PC-9 (cell line): ENCODE measurements at regions of chr13 and their contacts with region 1.

Region 1: GRCh38 chr13:30465585-30466357 is at the start of gene HMGB1:
- DNase-seq: peak; percentile 94 to 97
- H3K4me3 ChIP-seq: peak within 1 kb of the TSS; percentile 72
- H3K27ac ChIP-seq: peak within 1 kb of the TSS; percentile 86
- H3K4me1 ChIP-seq: peaks cover 31% of the 10 kb centered on the region
- H3K27me3 ChIP-seq: no peaks in the 10 kb centered on the region
- CTCF ChIP-seq: no peak
- total RNA-seq, gene HMGB1: 172 and 313 TPM in 2 replicates

Region 2: DNA sequence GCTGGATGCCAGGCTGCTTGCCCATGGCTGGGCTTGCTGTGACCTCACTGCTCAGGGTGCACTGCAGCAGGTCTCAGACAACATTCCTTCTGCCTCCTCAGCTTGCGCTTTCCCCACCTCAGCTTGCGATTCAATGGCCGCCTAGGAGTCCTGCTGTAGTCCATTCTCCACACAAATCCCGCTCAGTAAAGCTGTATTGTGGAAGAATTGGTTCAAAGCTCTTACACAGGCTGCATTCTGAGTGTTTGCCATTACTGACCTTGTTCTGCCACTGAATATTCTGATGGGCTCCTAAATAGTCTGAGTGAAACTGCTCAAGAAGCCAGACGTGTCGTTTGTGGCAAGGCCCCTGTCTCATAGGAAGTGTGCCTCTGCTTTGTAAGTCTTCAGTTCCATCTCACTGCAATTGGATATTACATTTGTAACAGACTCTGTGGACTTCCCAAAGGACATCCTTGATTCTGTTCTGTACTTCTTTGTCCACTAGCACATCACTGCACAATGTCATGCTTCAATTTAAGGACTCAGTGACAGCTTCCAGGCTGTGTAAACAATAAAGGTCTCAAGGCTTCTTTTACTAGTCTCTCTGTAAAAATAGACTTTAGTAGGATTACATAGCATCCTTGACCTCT is 208.2 kb before region 1 on chr13:
- CTCF ChIA-PET with region 1: no interaction called
- POLR2A ChIA-PET with region 1: no interaction called
- intact Hi-C with region 1: loop called (anchors 10 kb)
- DNase-seq: no peak
- H3K4me3 ChIP-seq: no peak overlapping the region
- H3K27ac ChIP-seq: no peak overlapping the region
- H3K4me1 ChIP-seq: no peaks in the 10 kb centered on the region
- H3K27me3 ChIP-seq: no peaks in the 10 kb centered on the region
- CTCF ChIP-seq: no peak

Region 3: DNA sequence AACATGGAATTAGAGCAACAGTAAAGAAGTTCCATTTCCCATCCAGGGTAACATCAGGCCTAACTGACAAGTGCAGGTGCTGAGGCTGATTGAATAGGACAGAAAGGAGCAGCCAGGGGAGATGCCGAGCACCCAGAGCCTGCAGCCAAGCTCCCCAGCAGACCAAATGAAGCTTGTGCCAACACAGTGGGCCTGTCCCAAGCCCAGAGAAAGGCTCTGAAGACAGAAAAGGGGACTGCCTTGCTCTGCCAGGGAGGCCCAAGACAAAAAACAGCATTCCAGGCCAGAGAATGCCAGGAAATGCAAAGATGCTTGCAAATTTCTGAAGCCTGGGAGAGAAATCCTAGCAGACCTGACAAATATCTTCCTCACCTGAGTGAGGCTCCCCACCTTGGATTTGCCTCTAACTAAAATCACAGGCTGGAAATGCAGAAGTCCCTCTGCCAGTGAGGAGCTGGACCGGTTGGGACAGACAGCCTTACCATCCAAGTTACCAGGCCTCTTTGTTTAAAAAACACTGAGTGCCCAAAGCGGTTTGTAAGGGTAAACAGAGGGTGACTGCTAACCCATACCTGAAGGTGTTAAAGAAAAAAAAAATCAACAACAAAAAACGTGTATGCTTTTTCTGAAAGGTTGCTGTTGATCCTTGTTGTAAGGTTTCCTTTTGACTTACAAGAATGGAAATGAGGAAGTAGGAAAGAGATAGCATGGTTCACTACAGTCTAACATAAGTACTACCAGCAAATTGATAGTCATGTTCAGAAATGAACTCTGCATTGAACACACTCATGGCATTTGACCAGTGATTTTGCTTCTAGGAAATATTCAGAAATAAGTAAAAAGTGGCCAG is 11.8 kb after region 1 on chr13:
- CTCF ChIA-PET with region 1: no interaction called
- POLR2A ChIA-PET with region 1: no interaction called
- intact Hi-C with region 1: loop called (anchors 1 kb)
- DNase-seq: no peak
- H3K4me3 ChIP-seq: no peak overlapping the region
- H3K27ac ChIP-seq: no peak overlapping the region
- H3K4me1 ChIP-seq: no peaks in the 10 kb centered on the region
- H3K27me3 ChIP-seq: no peaks in the 10 kb centered on the region
- CTCF ChIP-seq: no peak

Region 4: GRCh38 chr13:30617315-30618185 is 151.8 kb after region 1 on chr13 and contains the start of gene USPL1:
- CTCF ChIA-PET with region 1: no interaction called
- POLR2A ChIA-PET with region 1: no interaction called
- intact Hi-C with region 1: loop called (anchors 1 kb)
- DNase-seq: peak; percentile 93 to 95
- H3K4me3 ChIP-seq: peak within 1 kb of the TSS; percentile 99
- H3K27ac ChIP-seq: peak within 1 kb of the TSS; percentile 98
- H3K4me1 ChIP-seq: peaks cover 33% of the 10 kb centered on the region
- H3K27me3 ChIP-seq: no peaks in the 10 kb centered on the region
- CTCF ChIP-seq: no peak
- total RNA-seq, gene USPL1: 8.9 and 10.7 TPM in 2 replicates

Region 5: GRCh38 chr13:30865123-30866049 is 399.6 kb after region 1 on chr13:
- CTCF ChIA-PET with region 1: no interaction called
- POLR2A ChIA-PET with region 1: no interaction called
- intact Hi-C with region 1: loop called (anchors 10 kb)
- DNase-seq: peak; percentile 57 to 65
- H3K4me3 ChIP-seq: no peak overlapping the region
- H3K27ac ChIP-seq: 0 out of 2 replicates have a peak overlapping the region, but pooled peaks have one; percentile 5
- H3K4me1 ChIP-seq: 0 out of 2 replicates have a peak, but pooled peaks cover 9% of the 10 kb centered on the region
- H3K27me3 ChIP-seq: no peaks in the 10 kb centered on the region
- CTCF ChIP-seq: peak; percentile 96